MCF 10A (cell line): ENCODE measurements at regions of chr4 and their contacts with region 1.

Region 1: GRCh38 chr4:94961420-94961819 is 203.7 kb downstream of the BMPR1B start:
- DNase-seq: no peak
- H3K4me3 Mint-ChIP-seq: no peak overlapping the region
- H3K27ac Mint-ChIP-seq: no peak overlapping the region
- H3K4me1 Mint-ChIP-seq: no peaks in the 10 kb centered on the region
- H3K27me3 Mint-ChIP-seq: no peaks in the 10 kb centered on the region
- CTCF ChIP-seq: no peak

Region 2: GRCh38 chr4:94905511-94905910 is 55.9 kb before region 1 on chr4:
- CTCF ChIA-PET with region 1: interaction called, 10 read pairs
- POLR2A ChIA-PET with region 1: no interaction called
- intact Hi-C with region 1: no loop called
- DNase-seq: no peak
- H3K4me3 Mint-ChIP-seq: no peak overlapping the region
- H3K27ac Mint-ChIP-seq: no peak overlapping the region
- H3K4me1 Mint-ChIP-seq: no peaks in the 10 kb centered on the region
- H3K27me3 Mint-ChIP-seq: no peaks in the 10 kb centered on the region
- CTCF ChIP-seq: no peak

Region 3: GRCh38 chr4:95362906-95363558 is 401.6 kb after region 1 on chr4:
- CTCF ChIA-PET with region 1: no interaction called
- POLR2A ChIA-PET with region 1: no interaction called
- intact Hi-C with region 1: no loop called
- DNase-seq: peak; percentile 36
- H3K4me3 Mint-ChIP-seq: no peak overlapping the region
- H3K27ac Mint-ChIP-seq: no peak overlapping the region
- H3K4me1 Mint-ChIP-seq: no peaks in the 10 kb centered on the region
- H3K27me3 Mint-ChIP-seq: no peaks in the 10 kb centered on the region
- CTCF ChIP-seq: no peak